Breast epithelium (tissue), 4 donors: ENCODE measurements at regions of chr3 and their contacts with region 1.

Region 1: GRCh38 chr3:71838406-71838805 is 53.5 kb upstream of the PROK2 start:
- DNase-seq: no peak
- H3K4me3 ChIP-seq: no peak overlapping the region
- H3K27ac ChIP-seq: no peak overlapping the region
- H3K4me1 ChIP-seq: no peaks in the 10 kb centered on the region
- H3K27me3 ChIP-seq: no peaks in the 10 kb centered on the region
- CTCF ChIP-seq: no peak
- POLR2A ChIP-seq: no peak

Region 2: DNA sequence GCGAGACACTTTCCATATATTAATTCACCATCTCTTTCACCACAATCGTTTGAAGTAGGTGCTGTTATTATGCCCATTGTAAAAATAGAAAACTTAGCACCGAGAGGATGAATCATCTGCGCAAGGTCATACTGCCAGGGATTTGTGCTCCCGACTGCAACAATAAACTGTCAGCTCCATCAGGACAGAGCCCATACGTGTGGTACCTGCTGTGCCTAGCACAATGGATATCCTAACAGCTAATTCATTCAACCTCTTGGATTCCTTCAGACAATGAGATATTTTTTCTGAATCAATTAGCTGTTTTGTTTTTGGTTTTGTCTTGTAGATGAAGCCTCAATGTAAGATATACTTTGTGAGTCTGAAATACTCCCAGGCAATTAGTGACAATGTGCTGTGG is 21.1 kb before region 1 on chr3:
- intact Hi-C with region 1: loop called (anchors 1 kb)
- DNase-seq: no peak
- H3K4me3 ChIP-seq: no peak overlapping the region
- H3K27ac ChIP-seq: no peak overlapping the region
- H3K4me1 ChIP-seq: no peaks in the 10 kb centered on the region
- H3K27me3 ChIP-seq: no peaks in the 10 kb centered on the region
- CTCF ChIP-seq: no peak
- POLR2A ChIP-seq: no peak

Region 3: DNA sequence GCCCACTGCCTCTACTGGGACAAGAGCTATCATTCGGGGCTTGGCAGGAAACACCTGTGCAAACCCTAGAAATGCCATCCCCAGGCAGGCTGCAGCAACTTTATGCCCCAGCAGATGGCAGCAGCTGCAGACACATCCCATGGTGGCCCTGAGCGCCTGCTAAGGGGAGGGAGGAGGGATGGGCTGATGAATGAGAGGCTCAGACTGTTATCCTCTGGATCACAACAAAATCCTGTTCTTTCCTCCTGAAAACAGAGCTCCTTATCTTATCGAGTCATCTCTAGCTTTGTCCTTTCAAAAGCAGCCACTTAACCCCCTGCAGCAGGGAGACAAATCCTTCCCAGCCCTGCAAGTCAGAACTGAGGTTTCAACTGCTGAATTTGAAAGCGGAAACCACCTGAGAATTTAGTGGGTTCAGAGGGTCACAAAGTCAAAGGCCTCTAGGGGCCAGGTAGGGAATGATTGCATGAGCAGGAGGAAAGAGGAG is 37.1 kb after region 1 on chr3:
- intact Hi-C with region 1: no loop called
- DNase-seq: peak; percentile 65 to 69
- H3K4me3 ChIP-seq: no peak overlapping the region
- H3K27ac ChIP-seq: no peak overlapping the region
- H3K4me1 ChIP-seq: no peaks in the 10 kb centered on the region
- H3K27me3 ChIP-seq: no peaks in the 10 kb centered on the region
- CTCF ChIP-seq: peak; percentile 53 to 80 (median 78)
- POLR2A ChIP-seq: no peak